ENCODE measurements at regions of chr15 and their contacts with region 1.

Region 1: GRCh38 chr15:64305261-64305660 is 50.7 kb downstream of the CSNK1G1 start:
- DNase-seq: no peak
- H3K4me3 ChIP-seq: no peak overlapping the region
- H3K27ac ChIP-seq: no peak overlapping the region
- H3K4me1 ChIP-seq: no peaks in the 10 kb centered on the region
- H3K27me3 ChIP-seq: no peaks in the 10 kb centered on the region
- CTCF ChIP-seq: no peak
- POLR2A ChIP-seq: no peak

Region 2: DNA sequence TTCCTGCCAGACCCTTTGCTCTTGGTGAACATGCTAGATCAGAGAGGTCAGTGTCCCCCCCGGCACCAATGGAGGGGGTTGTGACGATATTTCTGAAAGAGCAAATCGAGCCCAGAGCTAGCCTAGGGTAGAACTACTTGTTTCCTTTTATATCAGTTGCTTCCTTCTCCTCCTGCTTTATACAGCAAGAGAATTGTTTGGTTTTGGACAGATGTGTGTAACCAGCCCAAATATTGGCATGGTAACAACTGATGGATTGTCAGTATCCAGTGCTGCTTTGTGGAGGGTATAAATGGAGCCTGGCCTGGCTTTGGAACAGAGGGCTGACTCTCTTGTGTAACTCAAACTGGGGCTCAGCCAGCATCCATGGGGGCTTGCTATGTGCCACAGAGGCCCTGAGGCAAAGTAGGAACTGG is 182.3 kb before region 1 on chr15:
- intact Hi-C with region 1: loop called (anchors 5 kb)
- DNase-seq: no peak
- H3K4me3 ChIP-seq: no peak overlapping the region
- H3K27ac ChIP-seq: no peak overlapping the region
- H3K4me1 ChIP-seq: no peaks in the 10 kb centered on the region
- H3K27me3 ChIP-seq: no peaks in the 10 kb centered on the region
- CTCF ChIP-seq: no peak
- POLR2A ChIP-seq: no peak

Region 3: DNA sequence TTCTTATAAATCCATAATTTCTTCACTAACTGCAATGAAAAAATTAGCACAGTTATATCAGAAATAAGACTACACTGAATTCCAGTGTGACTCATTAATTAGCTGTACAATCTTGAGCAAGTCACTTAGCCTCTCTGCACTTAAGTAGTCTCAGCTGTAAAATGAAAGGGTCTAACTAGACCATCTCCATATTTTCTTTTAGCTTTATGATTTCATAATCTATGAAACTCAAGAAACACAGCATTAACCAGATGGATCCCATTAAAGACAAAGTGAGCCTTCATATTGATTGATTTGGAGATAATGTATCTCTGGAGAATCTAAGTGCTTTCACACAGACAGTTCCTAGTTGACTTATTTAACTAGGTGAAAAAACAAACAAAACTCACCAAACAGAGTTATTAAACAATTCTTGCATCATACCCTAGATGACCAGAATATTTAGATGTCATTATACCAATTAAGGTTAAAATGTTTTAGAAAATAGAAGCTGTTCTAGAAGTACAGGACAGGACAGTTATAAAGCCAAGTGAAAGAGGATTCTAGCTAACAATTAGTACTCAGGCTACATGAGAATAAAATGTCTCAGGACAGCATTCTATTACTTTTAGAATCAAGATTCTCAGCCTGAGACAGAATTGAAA is 39.5 kb after region 1 on chr15:
- intact Hi-C with region 1: no loop called
- DNase-seq: no peak
- H3K4me3 ChIP-seq: no peak overlapping the region
- H3K27ac ChIP-seq: no peak overlapping the region
- H3K4me1 ChIP-seq: peaks cover 19% of the 10 kb centered on the region
- H3K27me3 ChIP-seq: no peaks in the 10 kb centered on the region
- CTCF ChIP-seq: no peak
- POLR2A ChIP-seq: no peak

Region 4: DNA sequence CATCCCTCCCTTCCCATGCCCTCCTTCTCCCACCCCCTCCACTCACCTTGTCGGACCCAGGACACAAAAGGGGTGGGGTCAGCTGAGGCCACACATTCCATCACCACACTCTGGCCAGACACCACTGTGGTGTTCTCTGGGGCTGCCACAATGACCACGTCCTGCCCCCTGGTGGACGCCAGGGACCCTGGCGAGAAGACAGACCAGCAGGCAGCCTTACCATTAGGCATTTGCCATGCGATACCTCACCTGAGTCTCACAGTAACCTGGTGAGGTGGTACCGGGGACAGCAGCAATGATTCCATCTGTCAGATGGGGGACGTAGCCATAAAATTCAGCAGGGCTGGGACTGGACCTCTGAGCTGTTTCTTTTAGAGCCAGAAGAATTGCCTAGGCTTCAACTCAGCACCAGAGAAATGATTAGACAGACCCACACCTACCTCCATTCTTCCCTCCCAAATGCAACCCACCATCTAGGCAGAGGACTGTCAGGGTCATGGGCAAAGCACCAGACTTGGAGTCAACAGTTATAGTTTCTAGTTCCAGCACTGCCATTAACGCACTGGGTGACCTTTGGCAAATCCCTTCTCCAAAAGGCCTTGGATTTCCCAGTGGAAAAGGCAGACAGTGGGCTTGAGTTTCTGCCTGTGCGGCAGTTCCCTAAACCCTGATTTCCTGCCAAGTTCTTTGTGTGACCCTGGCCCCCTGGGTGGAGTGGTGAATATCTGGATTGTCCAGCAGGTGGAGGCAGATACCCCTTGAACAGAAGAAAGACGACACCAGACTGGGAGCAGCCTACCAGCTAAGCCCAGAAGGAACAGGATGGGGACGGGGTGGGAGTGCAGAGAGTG is 1095.7 kb after region 1 on chr15:
- intact Hi-C with region 1: no loop called
- DNase-seq: no peak
- H3K4me3 ChIP-seq: no peak overlapping the region
- H3K27ac ChIP-seq: peak overlapping the region; percentile 33
- H3K4me1 ChIP-seq: peaks cover 5% of the 10 kb centered on the region
- H3K27me3 ChIP-seq: no peaks in the 10 kb centered on the region
- CTCF ChIP-seq: peak in 2 of 3 experiments; percentile 14 to 39
- POLR2A ChIP-seq: no peak